Common myeloid progenitor, CD34-positive (primary cell): ENCODE measurements at regions of chr3 and their contacts with region 1.

Region 1: DNA sequence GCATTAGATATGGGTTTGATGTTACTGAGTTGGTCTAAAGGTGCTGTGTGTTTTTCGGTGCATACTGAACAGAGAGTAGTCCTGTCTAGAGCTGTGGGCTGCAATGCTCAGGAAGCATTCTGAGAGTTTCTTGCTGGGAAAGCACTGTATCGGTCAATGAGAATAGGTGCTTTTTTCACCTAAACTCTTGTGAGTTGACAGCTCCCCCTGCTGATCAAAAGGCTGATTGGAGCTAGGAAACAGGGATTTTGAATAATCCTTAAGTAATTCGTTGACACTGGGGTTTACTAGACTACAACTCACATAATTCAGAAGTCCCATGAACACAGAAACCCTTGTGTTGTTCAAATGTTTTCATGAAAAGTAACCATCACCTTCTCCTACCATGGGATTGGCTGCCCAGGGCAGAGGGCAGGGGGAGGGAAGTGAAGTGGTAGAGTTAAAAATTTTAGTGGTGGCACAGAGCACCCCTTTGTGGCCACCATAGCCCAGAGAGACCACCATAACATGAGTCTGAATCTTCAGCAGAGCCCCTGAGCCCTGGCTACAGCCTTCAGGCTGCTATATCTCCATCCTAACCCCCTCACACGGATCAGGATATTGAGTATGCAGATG is 13.0 kb upstream of the MANF start:
- DNase-seq: peak; percentile 72 to 86 (median 80)
- H3K4me3 ChIP-seq: no peak overlapping the region
- H3K27ac ChIP-seq: no peak overlapping the region
- H3K4me1 ChIP-seq: peaks cover 0 to 11% (median 5%) of the 10 kb centered on the region in 4 experiments
- H3K27me3 ChIP-seq: no peaks in the 10 kb centered on the region

Region 2: DNA sequence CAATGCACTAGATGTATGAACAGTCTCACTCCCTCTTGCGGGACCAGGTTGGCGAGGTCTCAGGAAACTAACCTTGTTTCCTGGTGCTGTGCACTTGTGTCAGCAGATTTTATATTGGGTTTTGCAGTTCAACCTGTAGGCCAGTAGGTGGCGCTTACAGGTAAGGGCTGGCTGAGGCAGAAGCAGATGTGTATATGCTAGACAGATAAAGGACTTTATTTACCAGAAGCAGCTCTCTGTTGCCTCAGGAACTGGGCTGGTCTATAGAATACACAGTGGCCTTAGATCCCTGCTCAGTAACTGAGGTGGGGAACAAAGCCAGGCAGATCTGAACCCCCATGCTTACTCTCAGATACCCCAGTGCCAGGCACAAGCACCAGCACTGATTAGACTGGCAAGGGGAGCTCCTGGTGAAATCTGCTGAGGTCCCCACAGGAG is 400.5 kb before region 1 on chr3:
- CTCF ChIA-PET with region 1: interaction called, 11 read pairs
- POLR2A ChIA-PET with region 1: no interaction called
- DNase-seq: peak; percentile 62 to 82 (median 72)
- H3K4me3 ChIP-seq: no peak overlapping the region
- H3K27ac ChIP-seq: no peak overlapping the region
- H3K4me1 ChIP-seq: peaks cover 0 to 4% (median 0%) of the 10 kb centered on the region in 4 experiments
- H3K27me3 ChIP-seq: no peaks in the 10 kb centered on the region

Region 3: DNA sequence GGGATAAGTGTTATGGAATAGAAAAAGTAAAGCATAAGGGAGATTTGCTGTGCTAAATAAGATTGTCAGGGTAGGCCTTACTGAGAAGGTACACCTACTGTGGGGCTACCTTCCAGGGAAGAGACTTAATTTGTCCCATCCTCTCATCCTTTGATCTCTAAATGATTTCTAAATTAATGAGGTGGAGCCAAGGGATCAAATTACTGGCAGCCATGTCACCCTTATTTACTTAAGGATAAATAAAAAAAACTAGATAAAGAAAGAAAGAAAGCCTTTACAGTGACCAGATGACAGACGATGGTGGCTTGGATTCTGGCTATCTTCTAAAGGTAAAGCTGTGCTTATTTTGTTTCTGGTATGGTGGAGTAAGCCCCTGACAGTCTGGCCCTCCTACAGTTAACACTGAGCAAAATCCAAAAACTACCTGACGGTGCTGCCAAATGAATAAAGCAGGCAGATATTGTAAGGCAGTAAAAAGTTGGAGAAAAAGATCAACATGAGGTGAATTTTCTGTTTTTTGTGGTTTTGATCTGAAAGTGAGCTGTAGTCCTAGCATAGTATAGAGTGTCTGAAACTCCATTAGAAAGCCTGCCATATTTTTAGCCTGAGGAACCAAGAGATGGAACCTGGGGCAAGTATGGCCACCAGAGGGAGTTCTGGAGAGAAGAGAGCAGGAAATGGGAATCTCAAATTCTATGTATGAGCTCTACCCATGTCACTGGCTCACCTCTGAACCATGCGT is 272.1 kb before region 1 on chr3:
- CTCF ChIA-PET with region 1: interaction called, 21 read pairs
- POLR2A ChIA-PET with region 1: no interaction called
- DNase-seq: peak; percentile 10 to 43 (median 26)
- H3K4me3 ChIP-seq: no peak overlapping the region
- H3K27ac ChIP-seq: no peak overlapping the region
- H3K4me1 ChIP-seq: no peaks in the 10 kb centered on the region
- H3K27me3 ChIP-seq: no peaks in the 10 kb centered on the region

Region 4: GRCh38 chr3:51311055-51311454 is 61.0 kb before region 1 on chr3:
- CTCF ChIA-PET with region 1: interaction called, 10 read pairs
- POLR2A ChIA-PET with region 1: no interaction called
- DNase-seq: peak; percentile 37 to 63 (median 51)
- H3K4me3 ChIP-seq: no peak overlapping the region
- H3K27ac ChIP-seq: no peak overlapping the region
- H3K4me1 ChIP-seq: no peaks in the 10 kb centered on the region
- H3K27me3 ChIP-seq: no peaks in the 10 kb centered on the region

Region 5: GRCh38 chr3:51434746-51435327 is 62.8 kb after region 1 on chr3:
- CTCF ChIA-PET with region 1: no interaction called
- POLR2A ChIA-PET with region 1: no interaction called
- DNase-seq: peak; percentile 56 to 83 (median 78)
- H3K4me3 ChIP-seq: no peak overlapping the region
- H3K27ac ChIP-seq: no peak overlapping the region
- H3K4me1 ChIP-seq: no peaks in the 10 kb centered on the region
- H3K27me3 ChIP-seq: no peaks in the 10 kb centered on the region